OCI-LY7 (cell line): ENCODE measurements at regions of chr7 and their contacts with region 1.

Region 1: DNA sequence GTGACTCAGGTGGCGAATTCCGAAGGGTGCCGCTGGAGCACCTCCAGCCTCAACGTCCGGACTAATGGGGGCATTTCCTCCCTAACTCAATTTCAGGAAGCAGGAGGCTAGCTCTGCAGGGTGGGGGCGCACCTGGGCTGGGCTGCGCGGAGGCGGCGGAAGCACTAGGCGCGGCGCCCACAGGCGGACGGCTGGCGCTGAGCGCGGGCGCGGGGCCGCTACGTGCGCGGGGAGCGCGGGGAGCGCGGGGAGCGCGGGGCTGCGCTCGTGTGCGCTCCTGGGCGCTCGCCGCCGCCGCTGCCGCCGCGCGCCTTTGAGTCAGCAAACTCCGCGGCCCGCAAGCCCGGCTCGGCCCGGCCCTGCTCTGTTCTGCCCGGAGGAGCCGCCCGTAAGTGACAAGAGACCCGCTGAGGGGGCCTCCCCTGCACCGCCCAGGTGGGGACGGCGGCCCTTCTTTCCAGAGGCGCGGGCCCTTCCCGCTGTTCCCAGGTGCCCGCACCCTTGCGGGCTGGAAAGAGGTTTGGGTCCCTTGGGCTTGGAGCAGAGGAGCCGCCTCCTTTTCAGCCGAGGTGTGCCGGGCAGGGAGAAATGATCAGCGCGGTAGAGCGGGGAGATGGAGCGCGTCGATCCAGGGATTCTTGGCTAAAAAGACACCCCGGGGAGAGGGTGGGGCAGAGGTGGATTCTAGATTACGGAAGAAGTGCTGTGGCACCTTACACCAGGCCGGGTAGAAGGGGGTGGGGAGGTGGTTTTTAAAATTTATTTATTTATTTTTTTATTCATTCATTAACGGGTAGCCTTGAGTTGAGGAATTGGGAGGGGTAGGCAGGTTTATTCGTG is at the start of gene SNX10:
- DNase-seq: peak; percentile 91
- H3K4me3 ChIP-seq: peak within 1 kb of the TSS; percentile 99
- H3K27ac ChIP-seq: peak within 1 kb of the TSS; percentile 74
- H3K4me1 ChIP-seq: peaks cover 37% of the 10 kb centered on the region
- CTCF ChIP-seq: peak; percentile 75
- total RNA-seq, gene SNX10: 14.3 and 14.5 TPM in 2 replicates

Region 2: GRCh38 chr7:26318921-26319320 is 27.0 kb after region 1 on chr7:
- CTCF ChIA-PET with region 1: no interaction called
- POLR2A ChIA-PET with region 1: interaction called, 4 read pairs
- intact Hi-C with region 1: loop called (anchors 2 kb)
- DNase-seq: no peak
- H3K4me3 ChIP-seq: no peak overlapping the region
- H3K27ac ChIP-seq: no peak overlapping the region
- H3K4me1 ChIP-seq: peaks cover 29% of the 10 kb centered on the region
- CTCF ChIP-seq: no peak

Region 3: GRCh38 chr7:26365077-26365900 is 73.4 kb after region 1 on chr7:
- CTCF ChIA-PET with region 1: interaction called, 3 read pairs
- POLR2A ChIA-PET with region 1: interaction called, 4 read pairs
- intact Hi-C with region 1: loop called (anchors 1 kb)
- DNase-seq: peak; percentile 89
- H3K4me3 ChIP-seq: no peak overlapping the region
- H3K27ac ChIP-seq: peak overlapping the region; percentile 29
- H3K4me1 ChIP-seq: peaks cover 21% of the 10 kb centered on the region
- CTCF ChIP-seq: peak; percentile 93